ENCODE measurements at regions of chr22 and their contacts with region 1.

Region 1: DNA sequence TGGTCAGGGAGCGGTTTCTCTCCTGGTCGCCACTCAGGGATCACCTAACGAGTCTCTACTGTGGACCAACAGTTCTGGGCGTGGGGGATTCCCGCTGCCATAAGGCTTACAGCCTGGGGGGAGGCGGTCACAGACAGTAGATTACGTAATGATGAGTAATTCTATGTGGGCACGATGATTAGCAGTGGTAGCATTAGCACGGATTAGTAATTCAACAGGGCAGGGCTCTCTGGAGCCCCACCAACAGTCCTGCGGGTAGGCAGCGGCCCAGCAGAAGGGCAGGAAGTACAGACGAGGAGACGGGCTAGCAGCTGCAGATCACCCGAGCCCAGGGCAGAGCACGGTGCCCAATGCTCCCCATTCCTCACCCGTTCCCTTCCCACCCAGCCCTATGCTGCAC is 3.6 kb downstream of the SHISAL1 start:
- DNase-seq: no peak

Region 2: DNA sequence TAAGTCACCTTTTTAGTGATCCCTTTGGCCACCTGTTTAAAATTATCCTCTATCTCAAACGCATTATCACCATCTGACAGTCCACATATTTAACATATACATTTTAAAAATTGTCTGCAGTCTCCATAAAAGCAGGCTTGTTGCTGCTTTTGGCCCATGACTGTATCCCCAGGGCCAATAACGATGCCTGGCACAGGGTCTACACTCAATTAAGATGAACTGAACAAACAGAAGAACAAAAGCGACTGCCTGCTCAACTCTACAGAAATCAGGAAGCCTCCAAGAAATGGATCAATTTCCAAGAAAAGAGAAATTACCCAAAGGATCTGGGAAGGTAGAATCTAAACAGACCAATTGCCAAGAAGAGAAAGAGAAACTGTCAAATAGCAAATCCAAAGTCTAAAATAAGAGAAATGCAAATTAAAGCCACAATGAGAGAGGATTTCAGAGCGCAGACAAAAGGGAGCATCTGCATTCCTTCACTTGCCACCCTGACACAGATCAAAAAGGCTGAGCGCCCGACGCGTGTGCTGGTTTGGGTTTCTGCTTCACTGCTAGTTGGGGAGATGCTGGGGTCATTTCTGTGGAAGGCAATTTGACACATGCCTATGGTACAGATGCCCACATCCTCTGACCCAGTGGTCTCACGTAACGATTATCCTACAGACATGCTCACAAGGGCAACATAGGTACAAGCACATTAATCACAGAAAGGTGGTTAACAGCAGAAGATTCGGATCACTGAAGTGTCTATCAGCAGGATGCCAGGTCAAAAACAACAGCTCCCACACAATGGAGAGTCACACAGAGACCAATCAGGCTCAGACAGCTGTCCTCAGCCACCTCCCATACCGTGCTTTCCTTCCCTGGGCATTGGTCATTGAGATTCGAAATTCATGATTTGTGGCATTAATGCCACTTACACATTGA is 52.3 kb before region 1 on chr22:
- intact Hi-C with region 1: no loop called
- DNase-seq: no peak

Region 3: GRCh38 chr22:44266796-44267760 is 42.1 kb before region 1 on chr22:
- intact Hi-C with region 1: loop called (anchors 5 kb)
- DNase-seq: no peak

Region 4: GRCh38 chr22:44427611-44428470 is 118.7 kb after region 1 on chr22:
- intact Hi-C with region 1: no loop called
- DNase-seq: peak; percentile 46